AG04450 (cell line): ENCODE measurements at regions of chr14 and their contacts with region 1.

Region 1: GRCh38 chr14:101972268-101972774 is 7.9 kb downstream of the DYNC1H1 start:
- DNase-seq: peak; percentile 98
- H3K4me3 ChIP-seq: no peak overlapping the region
- H3K27ac ChIP-seq: no peak overlapping the region
- H3K27me3 ChIP-seq: no peaks in the 10 kb centered on the region
- CTCF ChIP-seq: no peak

Region 2: DNA sequence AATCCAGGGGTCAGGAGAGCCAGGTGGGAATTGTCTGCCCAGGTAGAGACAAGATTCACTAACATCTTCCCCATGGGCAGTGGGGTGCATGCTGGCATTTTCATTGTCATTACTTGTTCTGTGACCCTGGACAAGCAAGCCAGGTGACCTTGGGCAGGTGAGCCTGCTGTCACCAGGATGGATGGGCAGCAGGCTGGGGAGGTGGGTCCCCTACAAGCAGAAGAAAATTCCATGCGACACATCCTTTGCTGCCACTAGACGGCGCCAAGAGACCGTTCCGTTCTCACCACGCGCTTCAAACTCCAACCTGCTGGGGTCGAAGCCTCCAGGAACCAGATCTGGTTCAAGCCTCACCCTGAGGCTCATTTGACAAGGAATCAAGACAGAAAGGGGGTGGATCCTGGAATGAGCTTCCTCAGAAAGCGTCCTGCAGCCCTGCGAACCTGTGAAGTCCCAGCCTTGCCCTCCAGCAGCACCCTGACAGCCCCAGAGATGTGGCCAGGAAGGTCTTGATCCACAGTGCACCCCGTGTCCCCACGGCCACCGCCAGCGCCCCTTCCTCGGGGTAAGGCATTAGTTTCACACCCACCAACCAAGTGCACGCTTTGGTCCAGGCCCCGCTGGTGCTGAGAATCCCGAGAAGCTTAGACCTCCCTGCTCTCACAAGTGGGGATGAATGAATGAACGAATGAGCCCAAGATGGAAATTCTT is 11.2 kb before region 1 on chr14:
- CTCF ChIA-PET with region 1: interaction called, 35 read pairs
- POLR2A ChIA-PET with region 1: interaction called, 3 read pairs
- DNase-seq: peak; percentile 50
- H3K4me3 ChIP-seq: no peak overlapping the region
- H3K27ac ChIP-seq: no peak overlapping the region
- H3K27me3 ChIP-seq: no peaks in the 10 kb centered on the region
- CTCF ChIP-seq: peak; percentile 91